Endothelial cell of umbilical vein (primary cell): ENCODE measurements at regions of chr11 and their contacts with region 1.

Region 1: DNA sequence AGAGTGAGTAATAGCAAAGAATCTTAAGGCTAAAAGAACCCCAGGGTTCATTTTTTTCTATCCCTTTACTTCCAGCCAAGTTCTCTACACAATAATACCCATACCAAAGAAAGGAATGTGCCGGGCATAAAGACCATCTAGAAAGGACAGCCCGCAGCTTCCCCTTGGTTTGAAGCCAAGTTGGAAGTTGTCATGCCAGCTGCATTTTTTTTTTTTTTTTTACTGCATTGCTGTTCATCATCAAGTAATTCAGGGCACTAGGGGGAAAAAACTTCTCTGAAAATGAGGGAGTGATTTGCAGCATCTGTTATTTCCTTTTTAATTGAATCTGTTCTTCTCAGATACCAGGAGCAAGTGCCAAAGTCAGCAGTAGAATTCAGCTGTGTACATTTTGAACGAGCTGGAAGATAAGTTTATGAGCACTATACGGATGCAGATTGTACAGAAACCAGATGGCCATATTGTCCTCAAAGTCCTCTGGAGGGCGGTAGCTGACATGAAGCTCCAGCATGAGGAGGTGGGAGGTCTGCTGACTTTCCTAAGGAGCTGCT is 56.4 kb downstream of the UBASH3B start:
- DNase-seq: peak; percentile 98
- H3K4me3 ChIP-seq: no peak overlapping the region
- H3K27ac ChIP-seq: peak overlapping the region; percentile 48
- H3K4me1 ChIP-seq: peaks cover 35% of the 10 kb centered on the region
- H3K27me3 ChIP-seq: no peaks in the 10 kb centered on the region
- CTCF ChIP-seq: peak; percentile 37 to 42
- POLR2A ChIP-seq: peak; percentile 61

Region 2: DNA sequence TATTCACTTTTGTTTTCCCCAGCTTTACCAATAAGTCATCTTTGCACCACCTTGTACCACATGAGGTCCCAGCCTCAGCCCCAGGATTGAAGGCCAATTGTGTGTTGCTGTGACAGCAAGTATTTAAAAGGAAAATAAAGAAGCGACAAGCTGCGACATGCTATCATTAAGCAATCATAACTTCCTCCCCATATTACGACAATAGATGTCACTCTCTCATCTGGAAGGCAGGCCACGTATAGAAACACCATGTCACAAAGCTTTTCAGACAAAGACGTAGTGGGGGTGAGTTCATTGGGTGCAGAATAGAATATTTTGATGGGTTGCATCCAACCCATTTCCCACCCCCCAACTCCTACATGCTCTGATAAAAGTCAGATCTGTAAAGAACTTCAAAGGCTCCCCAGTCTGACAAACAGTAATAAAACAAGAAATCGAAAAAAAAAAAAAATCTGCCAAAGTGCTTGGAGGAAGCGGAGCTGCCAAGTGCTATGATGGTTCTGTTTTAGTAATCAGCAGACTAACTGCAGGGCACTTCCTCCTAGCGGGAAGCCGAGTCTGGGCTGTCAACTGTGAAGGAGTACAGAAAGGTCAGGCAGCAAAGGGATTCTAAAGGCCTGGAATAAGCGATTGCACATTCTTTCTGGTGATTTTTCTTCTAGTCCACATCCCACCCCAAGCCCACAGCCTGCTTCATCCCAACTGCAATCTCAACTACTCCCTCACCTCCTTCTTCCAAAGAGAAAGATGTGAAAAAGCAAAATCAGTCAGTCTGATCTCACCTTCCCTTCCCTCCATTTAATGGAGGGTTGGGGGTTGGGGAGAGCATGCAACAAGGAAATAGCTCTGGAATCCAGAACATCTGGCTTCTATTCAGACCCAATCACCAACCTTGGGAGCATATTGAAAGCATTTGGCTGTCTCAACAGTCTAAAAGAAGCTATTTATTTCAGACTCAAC is 187.8 kb before region 1 on chr11:
- CTCF ChIA-PET with region 1: no interaction called
- POLR2A ChIA-PET with region 1: no interaction called
- dilution Hi-C with region 1: no loop called
- intact Hi-C with region 1: no loop called
- DNase-seq: no peak
- H3K4me3 ChIP-seq: no peak overlapping the region
- H3K27ac ChIP-seq: no peak overlapping the region
- H3K4me1 ChIP-seq: no peaks in the 10 kb centered on the region
- H3K27me3 ChIP-seq: peaks cover 2 to 4% of the 10 kb centered on the region in 2 experiments
- CTCF ChIP-seq: no peak
- POLR2A ChIP-seq: no peak

Region 3: GRCh38 chr11:122697636-122698167 is 14.2 kb before region 1 on chr11:
- CTCF ChIA-PET with region 1: interaction called, 14 read pairs
- POLR2A ChIA-PET with region 1: no interaction called
- dilution Hi-C with region 1: no loop called
- intact Hi-C with region 1: no loop called
- DNase-seq: no peak
- H3K4me3 ChIP-seq: no peak overlapping the region
- H3K27ac ChIP-seq: no peak overlapping the region
- H3K4me1 ChIP-seq: peaks cover 7% of the 10 kb centered on the region
- H3K27me3 ChIP-seq: no peaks in the 10 kb centered on the region
- CTCF ChIP-seq: no peak
- POLR2A ChIP-seq: no peak

Region 4: DNA sequence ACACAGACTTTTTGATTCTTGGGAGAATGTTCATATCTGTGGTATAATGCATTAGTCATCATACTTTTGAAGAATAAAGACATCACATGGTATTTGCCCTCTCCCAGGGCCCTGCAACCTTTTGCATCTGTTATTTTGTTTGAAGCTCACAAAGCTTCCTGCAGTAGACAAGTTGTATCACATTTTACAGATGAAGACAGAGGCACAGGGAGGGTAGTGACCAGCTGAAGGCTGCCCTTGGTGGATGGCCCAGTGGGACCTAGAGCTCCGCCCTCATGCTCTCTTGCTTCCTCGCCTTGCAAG is 10.0 kb after region 1 on chr11:
- CTCF ChIA-PET with region 1: interaction called, 29 read pairs
- POLR2A ChIA-PET with region 1: no interaction called
- dilution Hi-C with region 1: no loop called
- intact Hi-C with region 1: loop called (anchors 1 kb)
- DNase-seq: peak; percentile 70
- H3K4me3 ChIP-seq: no peak overlapping the region
- H3K27ac ChIP-seq: no peak overlapping the region
- H3K4me1 ChIP-seq: peaks cover 30% of the 10 kb centered on the region
- H3K27me3 ChIP-seq: no peaks in the 10 kb centered on the region
- CTCF ChIP-seq: no peak
- POLR2A ChIP-seq: no peak

Region 5: DNA sequence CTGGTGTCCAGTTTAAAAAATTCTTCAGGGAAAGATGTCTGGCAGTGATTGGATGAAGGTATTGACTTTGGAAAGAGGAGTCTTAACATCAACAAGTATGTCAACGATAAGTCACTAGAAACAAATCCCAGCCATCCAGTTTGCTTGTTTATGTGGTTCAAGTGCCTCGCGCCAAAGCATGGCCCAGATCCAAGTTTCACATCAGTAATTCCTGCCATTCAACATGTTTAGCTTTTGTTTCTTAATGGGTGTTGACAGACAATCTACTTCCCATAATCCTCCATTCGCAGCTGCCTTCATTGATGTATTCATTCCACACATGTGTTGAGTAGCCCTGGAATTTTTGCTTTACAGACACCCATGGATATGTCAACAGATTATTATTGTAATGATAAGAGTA is 21.4 kb after region 1 on chr11:
- CTCF ChIA-PET with region 1: interaction called, 23 read pairs
- POLR2A ChIA-PET with region 1: interaction called, 5 read pairs
- dilution Hi-C with region 1: no loop called
- intact Hi-C with region 1: loop called (anchors 1 kb)
- DNase-seq: peak; percentile 99
- H3K4me3 ChIP-seq: no peak overlapping the region
- H3K27ac ChIP-seq: peak overlapping the region; percentile 69
- H3K4me1 ChIP-seq: peaks cover 59% of the 10 kb centered on the region
- H3K27me3 ChIP-seq: no peaks in the 10 kb centered on the region
- CTCF ChIP-seq: no peak
- POLR2A ChIP-seq: peak; percentile 20

Region 6: GRCh38 chr11:122754553-122755322 is 42.8 kb after region 1 on chr11:
- CTCF ChIA-PET with region 1: interaction called, 32 read pairs
- POLR2A ChIA-PET with region 1: interaction called, 5 read pairs
- dilution Hi-C with region 1: no loop called
- intact Hi-C with region 1: loop called (anchors 1 kb)
- DNase-seq: no peak
- H3K4me3 ChIP-seq: no peak overlapping the region
- H3K27ac ChIP-seq: no peak overlapping the region
- H3K4me1 ChIP-seq: peaks cover 33% of the 10 kb centered on the region
- H3K27me3 ChIP-seq: no peaks in the 10 kb centered on the region
- CTCF ChIP-seq: peak; percentile 36 to 37
- POLR2A ChIP-seq: no peak

Region 7: GRCh38 chr11:122920579-122920978 is 208.7 kb after region 1 on chr11:
- CTCF ChIA-PET with region 1: no interaction called
- POLR2A ChIA-PET with region 1: no interaction called
- dilution Hi-C with region 1: no loop called
- intact Hi-C with region 1: no loop called
- DNase-seq: no peak
- H3K4me3 ChIP-seq: no peak overlapping the region
- H3K27ac ChIP-seq: no peak overlapping the region
- H3K4me1 ChIP-seq: no peaks in the 10 kb centered on the region
- H3K27me3 ChIP-seq: no peaks in the 10 kb centered on the region
- CTCF ChIP-seq: no peak
- POLR2A ChIP-seq: no peak